Prostate gland (tissue), 2 donors: ENCODE measurements at regions of chr7 and their contacts with region 1.

Region 1: GRCh38 chr7:123534383-123535260 is at the start of gene IQUB:
- DNase-seq: peak; percentile 98
- H3K4me3 ChIP-seq: peak within 1 kb of the TSS; percentile 46 to 61
- H3K27ac ChIP-seq: peak within 1 kb of the TSS; percentile 86 to 92
- H3K4me1 ChIP-seq: no peaks in the 10 kb centered on the region
- H3K27me3 ChIP-seq: no peaks in the 10 kb centered on the region
- CTCF ChIP-seq: no peak
- POLR2A ChIP-seq: peak; percentile 49
- total RNA-seq, gene IQUB: 2.0 to 4.8 TPM

Region 2: DNA sequence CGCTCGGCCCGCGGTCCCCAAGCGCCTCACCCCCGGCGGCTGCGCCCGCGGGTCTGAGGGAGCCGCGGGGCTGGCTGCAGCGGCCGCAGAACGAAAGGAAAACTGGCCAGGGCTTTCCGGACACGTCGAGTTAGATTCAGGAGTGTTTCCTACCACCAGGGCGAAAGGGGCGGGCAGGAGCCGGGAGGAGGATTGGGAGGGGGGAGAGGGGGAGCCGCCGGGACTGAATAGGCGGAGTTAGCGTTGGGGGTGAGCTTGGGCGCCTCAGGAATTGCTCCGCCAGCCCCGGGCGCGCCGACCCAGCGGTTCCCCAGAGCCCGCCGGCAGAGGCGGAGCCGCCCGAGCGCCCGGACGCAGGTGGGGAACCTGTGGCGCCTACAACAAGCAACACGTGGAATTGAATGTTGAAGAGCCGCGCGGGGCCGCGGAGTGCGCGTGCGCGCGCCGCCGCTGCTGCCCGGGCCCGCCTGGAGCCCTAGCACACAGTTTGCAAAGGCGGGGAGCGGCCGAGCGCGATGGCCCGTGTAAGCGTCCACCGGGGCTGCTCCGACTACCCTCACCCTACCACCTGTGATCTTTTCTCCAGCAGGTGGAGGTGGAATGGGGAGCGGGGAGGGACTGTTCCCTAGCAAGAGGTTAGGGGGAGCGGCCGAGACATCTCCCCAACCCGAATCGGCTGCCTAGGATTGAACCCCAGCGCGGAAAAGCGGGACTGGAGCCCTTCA is 648.1 kb before region 1 on chr7 and contains the start of gene CADPS2:
- intact Hi-C with region 1: loop called (anchors 5 kb)
- DNase-seq: peak; percentile 87
- H3K4me3 ChIP-seq: peak within 1 kb of the TSS; percentile 77 to 82
- H3K27ac ChIP-seq: peak within 1 kb of the TSS; percentile 92 to 95
- H3K4me1 ChIP-seq: no peaks in the 10 kb centered on the region
- H3K27me3 ChIP-seq: no peaks in the 10 kb centered on the region
- CTCF ChIP-seq: peak in 3 of 4 experiments; percentile 10 to 70 (median 49)
- POLR2A ChIP-seq: peak; percentile 70
- total RNA-seq, gene CADPS2: 22.2 to 50.4 TPM

Region 3: GRCh38 chr7:123154231-123154860 is 380.3 kb before region 1 on chr7:
- intact Hi-C with region 1: loop called (anchors 10 kb)
- DNase-seq: peak; percentile 75
- H3K4me3 ChIP-seq: no peak overlapping the region
- H3K27ac ChIP-seq: no peak overlapping the region
- H3K4me1 ChIP-seq: no peaks in the 10 kb centered on the region
- H3K27me3 ChIP-seq: no peaks in the 10 kb centered on the region
- CTCF ChIP-seq: peak; percentile 41 to 92 (median 78)
- POLR2A ChIP-seq: no peak

Region 4: DNA sequence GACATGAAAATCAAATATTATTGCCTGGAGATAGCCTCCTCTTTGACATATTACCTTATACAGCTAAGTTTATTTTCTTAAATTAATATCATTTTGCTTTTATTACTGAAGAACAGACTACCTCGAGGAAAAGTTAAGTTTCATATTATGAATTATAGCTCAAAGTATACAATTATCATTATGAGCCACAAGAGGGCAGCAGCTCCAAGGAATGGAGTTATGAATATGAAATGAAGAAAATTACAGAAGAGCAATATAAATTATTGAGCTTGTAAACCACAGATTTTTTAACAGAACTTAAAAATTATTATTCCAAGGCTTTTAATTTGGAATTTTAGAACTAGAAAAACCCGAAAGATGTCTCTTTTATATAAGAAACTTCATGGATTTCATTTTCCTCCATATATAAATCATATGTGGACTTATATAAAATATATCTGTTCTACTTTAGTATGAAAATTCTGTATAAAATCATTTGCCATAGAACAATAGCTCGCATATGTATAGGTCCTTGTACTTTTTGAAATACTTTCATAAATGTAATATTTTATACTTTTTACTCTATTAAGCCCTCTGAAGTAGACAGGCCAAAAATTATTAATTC is 40.3 kb before region 1 on chr7:
- intact Hi-C with region 1: loop called (anchors 5 kb)
- DNase-seq: peak; percentile 24
- H3K4me3 ChIP-seq: no peak overlapping the region
- H3K27ac ChIP-seq: no peak overlapping the region
- H3K4me1 ChIP-seq: no peaks in the 10 kb centered on the region
- H3K27me3 ChIP-seq: no peaks in the 10 kb centered on the region
- CTCF ChIP-seq: peak; percentile 49 to 75 (median 60)
- POLR2A ChIP-seq: no peak

Region 5: DNA sequence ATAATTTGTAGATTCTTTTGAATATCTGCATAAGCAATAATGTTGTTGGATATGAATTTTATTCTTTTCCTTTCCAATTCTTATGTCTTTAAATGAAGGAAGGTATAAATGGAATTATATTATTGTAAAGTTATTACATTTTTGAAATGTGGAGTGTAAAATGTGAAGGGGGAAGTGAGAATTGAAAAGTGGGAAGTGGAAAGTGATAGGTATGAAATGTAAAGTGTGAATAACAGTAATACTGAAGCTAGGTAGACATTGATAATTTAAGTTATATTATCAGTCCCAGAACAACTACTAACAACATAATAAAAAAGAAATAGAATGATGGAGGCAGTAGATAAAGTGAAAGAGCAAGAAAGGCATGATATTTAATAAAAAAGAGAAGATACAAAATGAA is 270.7 kb after region 1 on chr7:
- intact Hi-C with region 1: no loop called
- DNase-seq: no peak
- H3K4me3 ChIP-seq: no peak overlapping the region
- H3K27ac ChIP-seq: no peak overlapping the region
- H3K4me1 ChIP-seq: no peaks in the 10 kb centered on the region
- H3K27me3 ChIP-seq: no peaks in the 10 kb centered on the region
- CTCF ChIP-seq: no peak
- POLR2A ChIP-seq: no peak